ENCODE measurements at regions of chr3 and their contacts with region 1.

Region 1: DNA sequence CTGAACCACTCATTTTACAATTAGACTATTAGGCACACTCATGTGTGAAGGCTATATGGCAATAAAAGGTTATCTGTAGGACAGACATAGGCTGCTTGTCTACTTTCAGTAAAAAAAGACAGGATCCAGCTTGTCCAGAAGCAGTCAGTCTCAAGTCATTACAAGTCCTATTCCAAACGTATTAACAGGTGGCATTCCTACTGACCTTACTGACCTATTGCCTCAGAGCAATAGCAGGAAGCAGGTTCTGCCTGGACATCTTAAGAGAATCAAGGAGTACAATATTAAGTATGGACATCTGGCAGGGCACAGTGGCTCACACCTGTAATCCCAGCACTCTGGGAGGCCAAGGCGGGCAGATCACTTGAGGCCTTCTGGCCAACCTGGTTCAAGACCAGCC is 7.0 kb downstream of the CMTM6 start:
- DNase-seq: no peak
- H3K4me3 Mint-ChIP-seq: no peak overlapping the region
- H3K27ac Mint-ChIP-seq: no peak overlapping the region
- H3K4me1 Mint-ChIP-seq: peaks cover 26% of the 10 kb centered on the region
- H3K27me3 Mint-ChIP-seq: no peaks in the 10 kb centered on the region

Region 2: DNA sequence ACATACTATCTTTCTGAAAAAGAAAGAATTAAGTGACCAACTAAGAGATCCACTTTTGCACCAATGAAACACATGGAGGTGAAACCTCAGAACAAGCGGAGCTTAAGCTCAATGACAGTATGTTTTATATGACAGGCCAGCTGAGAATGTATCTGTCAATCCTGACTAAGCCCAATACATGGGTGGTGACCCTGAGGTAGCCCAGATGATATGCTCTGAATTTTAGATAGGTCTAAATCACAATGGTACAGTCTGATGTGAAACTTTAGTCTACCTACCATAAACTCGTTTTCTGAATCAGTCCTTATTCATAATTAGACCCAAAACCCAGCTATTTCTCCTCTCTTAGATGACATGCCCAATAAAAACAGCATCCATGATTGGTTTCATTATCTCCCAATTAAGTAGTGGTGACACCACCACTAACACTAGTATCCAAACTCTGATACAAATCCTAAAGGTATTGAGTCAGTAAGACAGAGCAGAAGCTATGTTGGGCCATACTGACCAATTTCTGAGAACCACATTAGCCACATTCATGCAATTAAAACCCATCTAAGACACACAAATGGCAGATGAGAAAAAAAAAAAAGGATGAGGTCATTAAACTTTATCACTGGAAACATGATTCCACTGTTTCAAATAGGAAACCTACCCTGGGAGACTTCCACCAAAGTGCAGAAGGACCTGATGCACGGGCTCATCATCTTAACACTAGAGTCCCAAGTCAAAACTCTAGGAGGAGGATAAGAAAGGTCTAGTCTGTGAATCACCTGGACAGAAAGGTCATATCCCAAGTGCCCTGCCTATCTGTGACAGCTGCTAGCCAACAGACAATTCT is 13.6 kb before region 1 on chr3:
- CTCF ChIA-PET with region 1: no interaction called
- intact Hi-C with region 1: loop called (anchors 2 kb)
- DNase-seq: no peak
- H3K4me3 Mint-ChIP-seq: no peak overlapping the region
- H3K27ac Mint-ChIP-seq: no peak overlapping the region
- H3K4me1 Mint-ChIP-seq: peaks cover 21% of the 10 kb centered on the region
- H3K27me3 Mint-ChIP-seq: no peaks in the 10 kb centered on the region

Region 3: DNA sequence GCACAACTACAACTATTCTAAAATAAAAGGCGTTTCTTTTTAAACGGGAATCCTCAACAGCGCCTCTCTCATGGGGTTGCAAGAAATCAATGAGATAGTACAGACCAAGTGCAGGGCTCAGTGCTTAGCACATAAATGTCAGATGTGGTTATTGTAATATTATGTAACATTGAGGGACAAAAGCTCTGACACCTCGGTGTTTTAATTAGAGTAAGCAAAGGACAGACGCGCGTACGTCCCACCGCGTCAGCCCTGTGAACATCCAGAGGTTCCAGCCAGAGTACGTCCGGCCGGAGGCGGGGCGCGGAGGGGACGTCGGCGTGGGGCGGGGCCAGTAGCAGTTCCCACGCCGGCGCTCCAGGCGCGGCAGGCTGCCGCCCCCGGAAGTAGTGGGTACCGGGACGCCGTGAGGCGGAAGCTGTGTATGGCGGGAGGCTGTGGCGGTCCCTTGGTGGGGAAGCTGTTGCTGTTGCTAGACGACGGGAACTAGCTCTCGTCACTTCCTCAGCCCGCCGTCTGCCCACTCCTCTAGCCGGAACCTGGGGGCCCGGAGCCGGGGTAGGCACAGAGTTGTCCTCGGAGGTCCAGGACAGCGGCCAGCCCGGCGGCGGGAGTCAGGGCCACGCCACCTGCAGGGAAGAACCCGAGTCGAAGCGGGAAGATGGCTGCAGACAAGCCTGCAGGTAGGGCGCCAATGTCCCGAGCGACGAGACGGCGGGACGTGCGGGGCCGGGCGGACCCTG is 189.4 kb after region 1 on chr3 and contains the start of gene CNOT10:
- CTCF ChIA-PET with region 1: no interaction called
- intact Hi-C with region 1: no loop called
- DNase-seq: peak; percentile 97
- H3K4me3 Mint-ChIP-seq: peak within 1 kb of the TSS; percentile 90
- H3K27ac Mint-ChIP-seq: peak within 1 kb of the TSS; percentile 86
- H3K4me1 Mint-ChIP-seq: peaks cover 32% of the 10 kb centered on the region
- H3K27me3 Mint-ChIP-seq: no peaks in the 10 kb centered on the region
- total RNA-seq, gene CNOT10: 40.6 to 46.5 TPM

Measured in activated naive CD4-positive, alpha-beta T cell treated with anti-CD3 and anti-CD28 coated beads for 36 hours (primary cell).